ENCODE measurements at regions of chr19 and their contacts with region 1.

Region 1: DNA sequence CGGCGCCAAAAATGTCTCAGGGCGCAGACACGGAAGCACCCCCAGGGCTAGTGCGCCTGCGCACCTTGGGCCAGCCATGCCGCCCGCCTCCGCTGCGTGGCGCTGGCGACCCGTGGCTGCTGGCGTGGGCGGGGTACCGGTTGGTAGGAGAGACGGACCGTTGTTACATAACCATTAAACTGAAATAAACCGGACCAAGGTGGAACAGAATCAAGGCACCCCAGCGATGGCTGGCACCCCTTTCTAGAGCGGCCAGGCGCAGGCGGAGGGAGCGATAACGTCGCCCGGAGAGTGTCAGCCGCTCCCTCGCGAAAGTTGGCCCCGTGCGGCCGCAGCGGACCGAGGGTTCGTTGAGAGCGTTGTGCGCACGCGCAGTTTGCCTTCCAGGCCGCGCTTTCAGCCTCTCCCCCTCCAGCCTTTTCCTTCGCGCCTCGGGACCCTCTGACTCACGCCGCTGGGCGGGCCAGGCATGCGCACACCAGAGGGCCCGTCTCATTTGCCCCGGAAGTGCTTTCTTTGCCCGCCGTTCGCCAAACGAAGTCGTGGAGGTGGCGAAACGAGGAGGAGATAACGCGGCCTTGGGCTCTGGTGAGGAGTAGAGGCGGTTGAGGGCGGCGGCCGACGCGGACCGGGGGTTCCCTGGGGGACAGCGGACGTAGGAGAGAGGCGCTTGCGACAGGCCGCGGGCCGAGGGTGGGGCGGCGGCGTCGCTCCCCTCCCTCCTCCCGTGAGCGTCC is at the starts of genes PLEKHJ1 and SF3A2:
- DNase-seq: peak; percentile 98
- ATAC-seq: peak; percentile 94
- total RNA-seq, gene PLEKHJ1: 59.6 TPM
- total RNA-seq, gene SF3A2: 30.0 TPM

Region 2: DNA sequence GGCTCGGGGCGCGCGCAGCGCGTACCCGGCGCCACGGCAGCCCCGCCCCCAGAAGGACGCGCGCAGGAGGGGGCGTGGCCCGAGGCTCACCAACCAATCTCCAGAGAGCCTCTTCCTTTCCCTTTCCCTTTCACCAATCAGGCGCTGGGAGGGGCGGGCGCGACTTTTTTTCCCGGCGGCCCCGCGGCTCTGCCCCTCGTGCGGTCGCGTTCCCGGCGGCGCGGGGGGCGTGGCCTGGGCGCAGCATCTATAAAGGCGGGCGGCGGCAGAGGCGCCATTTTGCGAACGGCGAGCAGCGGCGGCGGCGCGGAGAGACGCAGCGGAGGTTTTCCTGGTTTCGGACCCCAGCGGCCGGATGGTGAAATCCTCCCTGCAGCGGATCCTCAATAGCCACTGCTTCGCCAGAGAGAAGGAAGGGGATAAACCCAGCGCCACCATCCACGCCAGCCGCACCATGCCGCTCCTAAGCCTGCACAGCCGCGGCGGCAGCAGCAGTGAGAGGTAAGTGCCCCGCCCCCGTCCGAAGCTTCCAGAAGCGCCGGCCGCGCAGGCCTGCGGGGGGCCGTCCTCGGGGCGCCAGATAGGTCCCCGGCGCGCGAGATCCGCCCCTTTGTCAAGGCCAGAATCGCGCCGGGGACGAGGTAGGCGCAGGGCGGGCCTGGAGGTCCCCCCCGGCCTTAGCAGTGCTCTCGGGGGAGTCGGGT is 32.9 kb after region 1 on chr19:
- intact Hi-C with region 1: loop called (anchors 5 kb)
- DNase-seq: peak; percentile 99
- ATAC-seq: peak; percentile 88

Measured in Right ventricle myocardium superior (tissue), 1 donor.